ENCODE measurements at regions of chr10 and their contacts with region 1.

Region 1: GRCh38 chr10:69408318-69409175 is 8.2 kb downstream of the TACR2 start:
- ATAC-seq: peak; percentile 66 to 88 (median 81)
- H3K4me3 ChIP-seq: peak overlapping the region; percentile 24 to 37 (median 31)
- H3K27ac ChIP-seq: peak overlapping the region in 1 of 2 donors; percentile 22
- H3K4me1 ChIP-seq: peaks cover 18 to 20% of the 10 kb centered on the region in 2 donors

Region 2: DNA sequence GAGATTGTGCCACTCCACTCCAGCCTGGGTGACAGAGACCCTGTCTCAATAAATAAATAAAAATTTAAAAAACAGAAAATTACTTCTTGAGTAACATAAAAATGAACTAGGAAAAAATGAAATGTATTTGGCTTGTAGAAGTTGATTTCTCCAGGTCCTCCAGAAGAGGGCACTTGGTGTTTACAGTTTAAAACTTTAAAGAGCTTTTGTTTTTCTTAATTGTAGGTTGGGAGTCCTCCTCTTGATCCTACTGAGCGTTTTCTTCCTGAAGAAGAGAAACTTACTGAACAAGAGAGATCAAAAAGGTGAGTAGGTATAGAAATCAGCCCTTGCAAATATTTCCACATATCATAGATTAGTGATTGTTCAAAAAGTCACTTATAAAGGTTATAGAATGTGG is 403.7 kb before region 1 on chr10:
- in situ Hi-C with region 1: loop called in 1 of 9 experiments (anchors 25 kb)
- ATAC-seq: no peak
- H3K4me3 ChIP-seq: no peak overlapping the region
- H3K27ac ChIP-seq: no peak overlapping the region
- H3K4me1 ChIP-seq: no peaks in the 10 kb centered on the region

Region 3: GRCh38 chr10:69160809-69161241 is 247.7 kb before region 1 on chr10:
- in situ Hi-C with region 1: no loop called
- ATAC-seq: no peak
- H3K4me3 ChIP-seq: no peak overlapping the region
- H3K27ac ChIP-seq: no peak overlapping the region
- H3K4me1 ChIP-seq: no peaks in the 10 kb centered on the region

Region 4: DNA sequence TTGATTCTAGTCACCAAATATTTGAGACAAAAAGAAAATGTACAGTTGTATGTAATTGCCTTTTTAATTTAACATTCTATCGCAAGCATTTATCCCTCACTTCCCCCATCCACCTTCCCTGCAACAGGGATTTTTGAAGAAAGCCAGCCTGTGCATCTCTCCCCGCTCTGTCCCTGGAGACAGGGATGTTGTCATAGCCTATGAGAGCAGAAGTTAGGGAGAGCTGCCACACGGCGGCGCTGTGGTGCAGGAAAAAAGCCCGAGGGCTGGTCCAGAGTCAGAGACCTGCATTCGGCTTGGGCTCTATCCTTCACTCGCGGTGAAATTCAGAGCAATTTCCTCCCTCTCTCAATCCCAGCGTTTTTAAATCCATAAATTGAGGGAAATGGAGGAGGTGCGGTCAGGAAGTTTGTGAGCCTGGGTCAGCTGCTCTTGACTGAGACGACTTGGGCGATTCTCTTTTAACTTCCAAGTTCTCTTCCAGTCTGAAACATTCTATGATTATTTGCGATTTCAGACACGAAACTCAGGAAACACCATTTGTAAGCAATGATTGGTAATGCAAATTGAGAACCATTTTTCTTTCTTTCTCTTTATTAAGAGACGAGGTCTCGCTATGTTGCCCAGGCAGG is 170.9 kb before region 1 on chr10:
- in situ Hi-C with region 1: loop called in 1 of 9 experiments (anchors 10 kb)
- ATAC-seq: peak; percentile 87 to 100 (median 100)
- H3K4me3 ChIP-seq: no peak overlapping the region
- H3K27ac ChIP-seq: no peak overlapping the region
- H3K4me1 ChIP-seq: peaks cover 2 to 7% of the 10 kb centered on the region in 2 donors

Region 5: DNA sequence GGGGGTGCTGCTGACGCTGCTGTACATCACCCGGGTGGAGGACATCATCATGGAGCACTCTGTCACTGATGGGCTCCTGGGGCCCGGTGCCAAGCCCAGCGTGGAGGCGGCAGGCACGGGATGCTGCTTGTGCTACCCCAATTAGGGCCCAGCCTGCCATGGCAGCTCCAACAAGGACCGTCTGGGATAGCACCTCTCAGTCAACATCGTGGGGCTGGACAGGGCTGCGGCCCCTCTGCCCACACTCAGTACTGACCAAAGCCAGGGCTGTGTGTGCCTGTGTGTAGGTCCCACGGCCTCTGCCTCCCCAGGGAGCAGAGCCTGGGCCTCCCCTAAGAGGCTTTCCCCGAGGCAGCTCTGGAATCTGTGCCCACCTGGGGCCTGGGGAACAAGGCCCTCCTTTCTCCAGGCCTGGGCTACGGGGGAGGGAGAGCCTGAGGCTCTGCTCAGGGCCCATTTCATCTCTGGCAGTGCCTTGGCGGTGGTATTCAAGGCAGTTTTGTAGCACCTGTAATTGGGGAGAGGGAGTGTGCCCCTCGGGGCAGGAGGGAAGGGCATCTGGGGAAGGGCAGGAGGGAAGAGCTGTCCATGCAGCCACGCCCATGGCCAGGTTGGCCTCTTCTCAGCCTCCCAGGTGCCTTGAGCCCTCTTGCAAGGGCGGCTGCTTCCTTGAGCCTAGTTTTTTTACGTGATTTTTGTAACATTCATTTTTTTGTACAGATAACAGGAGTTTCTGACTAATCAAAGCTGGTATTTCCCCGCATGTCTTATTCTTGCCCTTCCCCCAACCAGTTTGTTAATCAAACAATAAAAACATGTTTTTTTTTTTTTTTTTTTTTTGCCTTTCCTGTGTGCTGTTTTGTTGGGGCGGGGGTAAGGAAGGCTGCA is 98.5 kb after region 1 on chr10:
- in situ Hi-C with region 1: loop called in 1 of 9 experiments (anchors 10 kb)
- ATAC-seq: peak in 2 of 8 experiments; percentile 15 to 24
- H3K4me3 ChIP-seq: no peak overlapping the region
- H3K27ac ChIP-seq: no peak overlapping the region
- H3K4me1 ChIP-seq: no peaks in the 10 kb centered on the region

Measured in motor neuron (in vitro differentiated cells).